Gastrocnemius medialis (tissue), 4 donors: ENCODE measurements at regions of chr9 and their contacts with region 1.

Region 1: GRCh38 chr9:130042833-130043653 is at the start of gene FNBP1:
- DNase-seq: peak; percentile 66 to 72
- ATAC-seq: peak; percentile 88 to 90
- H3K4me3 ChIP-seq: peak within 1 kb of the TSS; percentile 85 to 94 (median 90)
- H3K27ac ChIP-seq: peak within 1 kb of the TSS; percentile 92 to 98 (median 94)
- H3K4me1 ChIP-seq: peaks cover 20 to 23% of the 10 kb centered on the region in 2 donors
- H3K27me3 ChIP-seq: no peaks in the 10 kb centered on the region
- CTCF ChIP-seq: no peak
- POLR2A ChIP-seq: peak; percentile 90 to 93
- total RNA-seq, gene FNBP1: 13.3 to 30.0 (median 17.9) TPM

Region 2: GRCh38 chr9:129962889-129963703 is 79.9 kb before region 1 on chr9:
- in situ Hi-C with region 1: no loop called
- intact Hi-C with region 1: loop called (anchors 5 kb)
- DNase-seq: peak; percentile 5 to 40
- ATAC-seq: peak; percentile 74 to 79
- H3K4me3 ChIP-seq: peak overlapping the region; percentile 23 to 52 (median 48)
- H3K27ac ChIP-seq: peak overlapping the region; percentile 66 to 87 (median 76)
- H3K4me1 ChIP-seq: peaks cover 0 to 11% of the 10 kb centered on the region in 2 donors
- H3K27me3 ChIP-seq: no peaks in the 10 kb centered on the region
- CTCF ChIP-seq: no peak
- POLR2A ChIP-seq: peak; percentile 36 to 56

Region 3: DNA sequence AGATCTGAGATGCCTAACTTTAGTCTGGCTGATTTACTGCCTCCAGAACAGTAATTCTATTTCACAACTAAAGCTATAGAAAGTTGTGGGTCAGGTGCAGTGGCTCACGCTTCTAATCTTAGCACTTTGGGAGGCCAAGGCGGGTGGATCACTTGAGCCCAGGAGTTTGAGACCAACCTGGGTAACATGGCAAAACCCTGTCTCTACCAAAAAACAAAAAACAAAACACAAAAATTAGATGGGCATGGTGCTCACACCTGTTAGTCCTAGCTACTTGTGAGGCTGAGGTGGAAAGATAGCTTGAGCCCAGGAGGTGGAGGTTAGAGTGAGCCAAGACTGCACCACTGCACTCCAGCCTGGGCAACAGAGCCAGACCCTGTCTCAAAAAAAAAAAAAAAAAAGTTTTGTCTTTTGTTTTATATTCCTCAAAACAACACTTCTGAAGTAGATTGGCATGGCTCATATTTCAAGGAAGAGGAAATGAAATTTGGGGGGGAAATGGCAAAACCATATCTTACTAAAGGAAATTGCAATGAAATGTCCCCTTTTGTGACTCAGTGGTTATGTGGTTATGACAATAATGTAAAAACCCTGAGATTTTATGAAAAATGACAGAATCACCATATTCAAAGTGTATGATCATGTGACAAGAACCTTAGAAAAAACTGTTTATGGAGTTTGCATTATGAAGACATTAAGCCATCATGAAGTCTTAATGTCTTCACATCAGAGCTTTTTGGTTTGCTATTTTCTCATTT is 16.3 kb before region 1 on chr9:
- in situ Hi-C with region 1: no loop called
- intact Hi-C with region 1: loop called (anchors 2 kb)
- DNase-seq: peak; percentile 46 to 67
- ATAC-seq: peak; percentile 87 to 91
- H3K4me3 ChIP-seq: no peak overlapping the region
- H3K27ac ChIP-seq: peak overlapping the region; percentile 51 to 83 (median 73)
- H3K4me1 ChIP-seq: peaks cover 54 to 88% of the 10 kb centered on the region in 2 donors
- H3K27me3 ChIP-seq: no peaks in the 10 kb centered on the region
- CTCF ChIP-seq: no peak
- POLR2A ChIP-seq: peak in 1 of 2 donors; percentile 9

Region 4: DNA sequence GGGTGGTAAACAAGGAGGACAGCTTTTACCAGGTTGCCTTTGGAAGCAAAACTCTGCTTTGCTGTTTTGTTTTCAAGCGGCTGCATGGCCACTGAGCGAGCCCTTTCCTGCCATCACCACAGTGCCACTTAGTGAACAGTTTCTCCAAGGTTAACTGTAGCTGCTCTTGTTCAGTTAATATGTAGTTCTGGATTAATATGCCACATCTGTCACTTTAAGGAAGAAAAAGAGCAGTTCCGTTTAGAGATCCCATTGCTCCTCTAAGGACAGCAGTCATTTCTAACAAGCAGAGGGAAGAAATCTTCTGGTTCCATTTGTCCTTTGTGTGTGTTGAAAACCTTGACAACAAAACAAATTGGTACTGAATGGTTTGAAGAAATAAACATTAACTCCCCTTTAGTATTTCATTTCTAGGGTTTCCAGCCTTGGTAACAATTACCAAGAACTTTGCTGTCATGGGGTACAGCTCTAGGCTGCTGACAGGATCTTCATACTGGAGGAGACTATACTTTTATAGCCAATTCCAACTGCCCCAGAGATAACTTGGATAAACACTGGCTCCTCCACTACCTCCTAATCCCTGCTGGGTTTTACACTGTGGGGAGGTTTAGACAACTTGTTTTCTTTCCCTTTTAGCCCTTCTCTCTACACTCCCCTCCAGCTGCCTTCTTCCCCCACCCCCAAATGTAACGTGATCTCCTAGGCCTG is 781.8 kb after region 1 on chr9:
- in situ Hi-C with region 1: no loop called
- intact Hi-C with region 1: no loop called
- DNase-seq: no peak
- ATAC-seq: peak; percentile 51 to 70
- H3K4me3 ChIP-seq: peak overlapping the region in 2 of 4 donors; percentile 4 to 14
- H3K27ac ChIP-seq: peak overlapping the region; percentile 56 to 70 (median 64)
- H3K4me1 ChIP-seq: peaks cover 32 to 35% of the 10 kb centered on the region in 2 donors
- H3K27me3 ChIP-seq: no peaks in the 10 kb centered on the region
- CTCF ChIP-seq: no peak
- POLR2A ChIP-seq: peak in 1 of 2 donors; percentile 9